ENCODE measurements at regions of chr14 and their contacts with region 1.

Region 1: DNA sequence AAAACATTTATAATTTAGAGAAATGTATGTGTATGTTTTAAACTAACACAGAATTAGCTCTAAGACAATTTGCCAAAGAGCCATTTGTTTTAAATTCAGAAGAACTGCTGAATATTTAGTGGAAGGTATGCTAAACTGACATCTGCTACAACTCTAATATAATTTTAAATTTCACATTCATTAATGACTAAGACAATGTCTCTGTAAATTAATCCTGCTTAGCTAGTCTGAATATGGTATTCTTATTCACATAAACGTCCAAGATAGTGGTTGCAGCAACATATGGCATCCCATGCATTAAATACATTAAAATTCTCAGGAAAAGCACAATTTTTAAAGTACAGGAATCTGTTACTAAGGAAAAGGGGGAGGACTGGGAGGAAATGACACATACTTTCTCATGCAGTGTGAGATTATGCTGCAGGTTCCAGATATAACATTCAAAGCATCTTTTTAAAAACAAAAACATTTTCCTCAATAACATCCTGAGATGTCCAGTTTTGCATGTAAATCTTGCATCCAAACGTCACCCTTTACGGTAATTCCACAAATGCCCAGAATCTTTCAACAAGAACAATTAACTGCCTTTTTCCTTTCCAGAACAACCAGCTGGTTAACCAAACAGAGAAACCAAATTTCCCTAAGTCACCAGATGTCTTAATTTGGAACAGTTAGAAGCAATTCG is 26.9 kb downstream of the WDR89 start:
- DNase-seq: peak; percentile 98
- H3K4me3 ChIP-seq: peak overlapping the region in 1 of 3 experiments; percentile 35
- H3K27ac ChIP-seq: peak overlapping the region; percentile 90
- H3K4me1 ChIP-seq: peaks cover 30% of the 10 kb centered on the region
- H3K27me3 ChIP-seq: no peaks in the 10 kb centered on the region
- CTCF ChIP-seq: no peak
- POLR2A ChIP-seq: peak; percentile 62

Region 2: DNA sequence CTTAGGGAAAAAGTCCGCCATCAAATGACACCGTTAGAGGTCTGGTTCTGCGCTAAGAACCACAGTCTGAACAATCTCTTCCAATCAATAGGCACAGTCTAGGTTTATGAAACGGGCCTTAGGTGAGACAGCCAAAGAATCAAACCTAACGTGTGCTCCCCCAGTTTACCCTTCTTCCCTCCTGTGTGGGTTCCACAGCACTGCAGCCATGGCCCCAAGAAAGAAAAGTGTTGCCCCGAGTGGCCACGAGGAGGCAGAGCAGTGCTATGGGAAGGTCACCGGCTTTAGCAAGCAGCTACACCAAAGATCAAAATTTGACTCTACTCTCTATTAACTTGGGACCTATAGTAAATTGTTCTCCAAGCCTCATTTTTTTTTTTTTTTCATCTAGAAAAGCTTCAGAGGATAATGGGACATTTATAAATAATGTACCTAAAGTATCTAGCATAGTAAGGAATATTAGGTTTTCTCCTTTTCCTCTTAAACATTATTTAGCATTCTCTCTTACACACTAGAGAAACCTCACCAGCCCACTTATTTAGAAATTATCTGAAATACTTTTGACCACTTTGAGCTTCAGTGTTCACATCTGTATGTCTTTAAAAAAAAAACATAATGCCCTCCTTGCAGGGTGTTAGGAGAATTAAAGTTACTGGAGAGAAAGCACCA is 225.9 kb before region 1 on chr14:
- CTCF ChIA-PET with region 1: interaction called, 11 read pairs
- POLR2A ChIA-PET with region 1: no interaction called
- dilution Hi-C with region 1: no loop called
- intact Hi-C with region 1: no loop called
- DNase-seq: peak; percentile 75
- H3K4me3 ChIP-seq: no peak overlapping the region
- H3K27ac ChIP-seq: no peak overlapping the region
- H3K4me1 ChIP-seq: no peaks in the 10 kb centered on the region
- H3K27me3 ChIP-seq: no peaks in the 10 kb centered on the region
- CTCF ChIP-seq: peak; percentile 73 to 81
- POLR2A ChIP-seq: no peak

Region 3: DNA sequence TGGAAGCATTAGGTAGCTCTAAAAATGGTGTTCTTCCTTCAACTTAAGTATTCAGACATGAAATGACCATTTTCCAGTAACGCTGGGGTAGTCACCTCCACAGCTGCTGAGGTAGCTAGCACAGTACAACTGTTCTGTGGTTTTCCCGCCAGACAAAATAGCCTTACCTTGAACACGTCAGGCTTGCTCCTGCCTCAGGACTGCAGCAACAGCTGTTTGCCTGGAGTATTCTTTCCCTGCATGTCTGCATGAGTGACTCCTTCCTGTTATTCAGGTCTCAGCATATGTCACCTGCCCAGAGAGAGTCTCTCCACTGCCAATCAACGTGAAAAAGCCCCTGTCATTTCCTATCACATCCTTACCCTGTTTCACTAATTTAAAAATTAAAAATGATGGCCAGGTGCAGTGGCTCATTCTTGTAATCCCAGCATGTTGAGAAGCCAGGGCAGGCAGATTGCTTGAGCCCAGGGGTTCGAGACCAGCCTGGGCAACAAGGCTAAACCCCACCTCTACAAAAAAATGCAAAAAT is 11.0 kb before region 1 on chr14:
- CTCF ChIA-PET with region 1: interaction called, 11 read pairs
- POLR2A ChIA-PET with region 1: interaction called, 4 read pairs
- dilution Hi-C with region 1: no loop called
- intact Hi-C with region 1: no loop called
- DNase-seq: no peak
- H3K4me3 ChIP-seq: no peak overlapping the region
- H3K27ac ChIP-seq: no peak overlapping the region
- H3K4me1 ChIP-seq: no peaks in the 10 kb centered on the region
- H3K27me3 ChIP-seq: no peaks in the 10 kb centered on the region
- CTCF ChIP-seq: no peak
- POLR2A ChIP-seq: no peak

Region 4: GRCh38 chr14:63677821-63678380 is 63.1 kb after region 1 on chr14:
- CTCF ChIA-PET with region 1: no interaction called
- POLR2A ChIA-PET with region 1: no interaction called
- dilution Hi-C with region 1: no loop called
- intact Hi-C with region 1: loop called (anchors 1 kb)
- DNase-seq: peak; percentile 94
- H3K4me3 ChIP-seq: no peak overlapping the region
- H3K27ac ChIP-seq: peak overlapping the region; percentile 43
- H3K4me1 ChIP-seq: peaks cover 10% of the 10 kb centered on the region
- H3K27me3 ChIP-seq: no peaks in the 10 kb centered on the region
- CTCF ChIP-seq: no peak
- POLR2A ChIP-seq: no peak

Measured in endothelial cell of umbilical vein (primary cell).